ENCODE measurements at regions of chr4 and their contacts with region 1.

Region 1: DNA sequence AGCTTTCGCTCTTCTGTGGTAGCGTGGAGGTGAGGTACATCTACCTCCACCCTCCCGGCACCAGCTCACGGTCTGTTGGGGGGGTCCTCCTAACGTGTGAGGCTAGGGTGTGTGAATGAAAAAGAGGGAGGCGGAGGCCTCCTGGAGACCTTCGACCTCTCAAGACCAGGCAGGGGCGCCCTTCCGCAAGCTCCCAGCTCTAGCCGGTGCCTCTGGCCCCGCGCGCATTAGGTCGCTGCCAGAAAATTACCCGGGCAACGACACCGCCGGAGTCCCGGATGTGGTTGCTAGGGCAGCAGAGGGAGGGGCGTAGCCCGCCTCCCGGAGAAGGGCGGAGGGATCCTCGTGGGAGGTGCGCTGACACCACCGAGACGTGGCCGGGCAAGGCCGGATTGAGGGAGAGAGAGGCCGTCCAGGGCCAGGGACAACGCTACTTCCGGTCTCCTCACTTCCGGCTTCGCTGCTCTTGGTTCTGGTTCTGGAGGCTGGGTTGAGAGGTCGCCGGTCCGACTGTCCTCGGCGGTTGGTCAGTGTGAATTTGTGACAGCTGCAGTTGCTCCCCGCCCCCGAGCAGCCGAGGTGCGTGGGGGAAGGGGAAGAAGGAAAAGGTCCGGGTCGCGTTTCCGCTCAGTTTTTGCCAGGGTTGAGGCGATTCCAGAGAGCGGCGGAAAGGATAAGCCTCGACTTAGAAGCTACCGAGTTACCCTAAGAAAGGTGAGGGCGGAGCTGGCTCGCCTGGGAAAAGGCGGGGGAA is at the starts of genes ARFIP1 and TIGD4:
- DNase-seq: peak; percentile 86 to 99
- H3K4me3 ChIP-seq: peak within 1 kb of the TSS; percentile 79 to 81
- H3K27ac ChIP-seq: peak within 1 kb of the TSS; percentile 84 to 88
- H3K4me1 ChIP-seq: peaks cover 0 to 6% of the 10 kb centered on the region in 2 donors
- H3K27me3 ChIP-seq: no peaks in the 10 kb centered on the region
- CTCF ChIP-seq: peak in 1 of 3 experiments; percentile 32
- total RNA-seq, gene ARFIP1: 11.6 TPM
- total RNA-seq, gene TIGD4: not detected

Region 2: GRCh38 chr4:151227731-151228130 is 1552.0 kb before region 1 on chr4:
- intact Hi-C with region 1: loop called (anchors 10 kb)
- DNase-seq: peak; percentile 18 to 84
- H3K4me3 ChIP-seq: peak overlapping the region; percentile 44 to 56
- H3K27ac ChIP-seq: peak overlapping the region; percentile 85
- H3K4me1 ChIP-seq: peaks cover 0 to 10% of the 10 kb centered on the region in 2 donors
- H3K27me3 ChIP-seq: no peaks in the 10 kb centered on the region
- CTCF ChIP-seq: no peak

Region 3: GRCh38 chr4:152535903-152536544 is 243.7 kb before region 1 on chr4 and contains the start of gene FBXW7:
- intact Hi-C with region 1: loop called (anchors 1 kb)
- DNase-seq: peak; percentile 97 to 100
- H3K4me3 ChIP-seq: peak within 1 kb of the TSS; percentile 58 to 97
- H3K27ac ChIP-seq: peak within 1 kb of the TSS; percentile 92 to 94
- H3K4me1 ChIP-seq: peaks cover 0 to 28% of the 10 kb centered on the region in 2 donors
- H3K27me3 ChIP-seq: no peaks in the 10 kb centered on the region
- CTCF ChIP-seq: no peak
- total RNA-seq, gene FBXW7: 128 TPM

Region 4: DNA sequence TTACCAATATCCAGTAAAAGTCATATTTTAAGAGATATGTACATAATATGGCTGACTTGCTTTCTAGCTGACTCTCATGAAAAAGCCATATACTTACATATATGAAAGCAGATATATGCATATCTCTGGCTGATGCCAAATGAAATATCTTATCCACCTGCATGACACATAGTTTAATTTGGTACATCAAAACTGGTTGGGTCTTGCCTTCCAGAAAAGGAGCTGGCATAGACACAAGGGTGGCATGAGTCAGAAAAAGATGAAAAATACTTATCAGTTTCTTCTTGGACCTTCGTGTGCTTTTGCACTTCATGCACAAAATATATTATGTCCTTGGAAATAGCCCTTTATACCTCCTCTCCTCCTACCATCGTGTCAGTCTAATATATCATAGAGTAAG is 32.2 kb before region 1 on chr4:
- intact Hi-C with region 1: no loop called
- DNase-seq: no peak
- H3K4me3 ChIP-seq: no peak overlapping the region
- H3K27ac ChIP-seq: no peak overlapping the region
- H3K4me1 ChIP-seq: no peaks in the 10 kb centered on the region
- H3K27me3 ChIP-seq: no peaks in the 10 kb centered on the region
- CTCF ChIP-seq: no peak

Region 5: DNA sequence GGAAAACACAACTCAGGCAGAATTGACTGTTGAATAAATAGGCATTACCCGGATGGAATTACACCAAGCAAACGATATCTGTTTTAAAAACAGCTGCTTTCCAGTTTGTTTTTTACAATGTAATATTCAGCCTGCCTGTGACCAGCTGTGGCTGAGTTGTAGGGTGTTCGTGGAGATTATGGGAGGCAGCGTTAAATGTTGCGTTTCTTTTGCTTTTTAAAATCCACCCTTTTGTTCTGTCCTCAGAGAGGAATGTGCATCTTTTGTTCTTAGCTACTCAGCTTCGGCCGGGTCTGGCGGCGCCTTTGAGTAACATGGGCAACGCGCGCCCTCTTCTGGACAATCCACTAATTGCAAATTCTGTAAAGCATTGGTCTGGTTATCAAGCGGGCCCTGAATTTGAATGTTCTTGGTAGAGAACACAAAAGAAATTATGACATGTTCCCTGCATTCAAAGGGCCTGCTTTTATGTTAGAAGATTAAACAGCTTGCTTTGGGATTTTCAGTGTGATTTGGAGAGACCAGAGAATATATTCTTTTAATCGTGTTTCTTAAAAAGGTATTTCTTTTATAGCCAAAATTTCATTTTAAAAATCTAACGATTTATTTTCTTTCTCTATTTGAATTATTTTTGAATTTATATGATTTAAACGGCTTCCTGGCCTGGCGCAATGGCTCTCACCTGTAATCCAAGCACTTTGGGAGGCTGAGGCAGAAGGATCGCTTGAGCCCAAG is 348.2 kb after region 1 on chr4:
- intact Hi-C with region 1: loop called (anchors 10 kb)
- DNase-seq: peak in 1 of 2 donors; percentile 93
- H3K4me3 ChIP-seq: peak overlapping the region in 1 of 2 donors; percentile 29
- H3K27ac ChIP-seq: no peak overlapping the region
- H3K4me1 ChIP-seq: peaks cover 0 to 4% of the 10 kb centered on the region in 2 donors
- H3K27me3 ChIP-seq: no peaks in the 10 kb centered on the region
- CTCF ChIP-seq: peak; percentile 75 to 88 (median 82)

Region 6: DNA sequence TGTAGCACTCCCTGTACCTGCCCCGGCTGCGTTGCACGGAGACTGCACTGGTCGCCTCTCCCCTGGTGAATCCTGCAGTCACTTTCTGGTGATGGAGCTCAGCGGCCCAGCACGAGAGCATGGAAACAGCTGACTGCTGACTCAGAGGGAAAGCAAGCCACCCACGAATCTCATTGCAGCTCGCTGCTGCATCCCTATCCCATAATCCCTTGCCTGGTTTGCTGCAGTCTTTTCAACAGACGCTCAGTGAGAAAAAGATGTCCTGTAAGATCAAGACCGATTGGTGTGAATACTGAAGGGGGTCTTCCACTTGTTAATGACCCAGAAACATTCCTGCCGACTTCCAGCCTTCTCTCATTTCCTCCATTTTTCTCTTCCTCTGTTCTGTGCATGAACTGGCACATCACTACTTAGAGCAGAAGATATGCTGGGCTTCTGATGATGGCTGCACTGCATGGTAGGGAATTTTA is 477.5 kb after region 1 on chr4:
- intact Hi-C with region 1: no loop called
- DNase-seq: no peak
- H3K4me3 ChIP-seq: no peak overlapping the region
- H3K27ac ChIP-seq: no peak overlapping the region
- H3K4me1 ChIP-seq: no peaks in the 10 kb centered on the region
- H3K27me3 ChIP-seq: no peaks in the 10 kb centered on the region
- CTCF ChIP-seq: no peak

Region 7: GRCh38 chr4:154551872-154552686 is 1772.4 kb after region 1 on chr4:
- intact Hi-C with region 1: loop called (anchors 5 kb)
- DNase-seq: peak; percentile 19 to 84
- H3K4me3 ChIP-seq: no peak overlapping the region
- H3K27ac ChIP-seq: peak overlapping the region in 1 of 2 donors; percentile 4
- H3K4me1 ChIP-seq: peaks cover 3 to 9% of the 10 kb centered on the region in 2 donors
- H3K27me3 ChIP-seq: no peaks in the 10 kb centered on the region
- CTCF ChIP-seq: peak; percentile 64 to 86 (median 81)

Measured in ascending aorta (tissue), 2 donors.